ENCODE measurements at regions of chr17 and their contacts with region 1.

Region 1: DNA sequence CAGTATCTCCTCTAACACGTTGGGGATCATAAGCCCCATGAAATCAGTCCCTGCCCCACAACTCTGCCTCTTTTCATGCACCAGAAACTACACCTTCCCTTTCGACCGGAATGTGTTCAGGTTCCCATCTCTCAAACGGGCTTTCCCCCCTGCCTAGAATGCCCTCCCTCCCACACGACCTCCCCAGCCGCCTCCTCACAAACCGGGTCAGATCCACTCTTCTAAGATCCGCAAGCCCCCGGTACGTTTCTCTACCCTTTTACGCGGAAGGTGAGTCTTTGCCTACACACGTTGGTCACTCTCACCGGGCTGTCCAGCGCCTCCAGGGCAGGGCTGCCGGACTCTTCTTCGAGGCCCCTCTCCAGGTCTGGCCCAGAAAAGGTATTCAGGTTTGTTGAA is 708 bp downstream of the DHX33 start:
- H3K4me3 ChIP-seq: peak overlapping the region; percentile 89
- H3K27ac ChIP-seq: peak overlapping the region; percentile 80
- H3K4me1 ChIP-seq: peaks cover 18% of the 10 kb centered on the region
- CTCF ChIP-seq: no peak

Region 2: DNA sequence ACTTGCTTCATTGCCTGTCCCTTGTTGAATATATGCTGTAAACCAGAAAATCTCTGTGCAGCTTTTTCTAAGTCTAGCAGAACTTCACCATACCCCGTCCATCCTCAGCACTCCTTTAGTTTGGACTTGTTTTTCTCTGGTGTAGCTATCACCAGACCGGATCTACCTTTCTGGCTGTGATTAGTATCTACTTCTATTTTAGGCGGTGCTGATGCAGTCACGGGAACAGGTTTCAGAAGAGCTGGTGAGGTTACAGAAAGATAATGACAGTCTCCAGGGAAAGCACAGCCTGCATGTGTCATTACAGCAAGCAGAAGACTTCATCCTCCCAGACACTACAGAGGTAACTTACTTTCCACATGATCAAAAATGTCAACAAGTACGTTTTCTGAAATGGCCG is 95.0 kb before region 1 on chr17:
- CTCF ChIA-PET with region 1: no interaction called
- POLR2A ChIA-PET with region 1: no interaction called
- H3K4me3 ChIP-seq: no peak overlapping the region
- H3K27ac ChIP-seq: no peak overlapping the region
- H3K4me1 ChIP-seq: no peaks in the 10 kb centered on the region; the same call in 1 of the 2 replicates
- CTCF ChIP-seq: no peak

Region 3: GRCh38 chr17:5419356-5419958 is 48.6 kb before region 1 on chr17 and contains the start of gene NUP88:
- CTCF ChIA-PET with region 1: interaction called, 3 read pairs
- POLR2A ChIA-PET with region 1: interaction called, 10 read pairs
- H3K4me3 ChIP-seq: peak within 1 kb of the TSS; percentile 97
- H3K27ac ChIP-seq: peak within 1 kb of the TSS; percentile 92
- H3K4me1 ChIP-seq: no peaks in the 10 kb centered on the region; the same call in 1 of the 2 replicates
- CTCF ChIP-seq: no peak

Region 4: DNA sequence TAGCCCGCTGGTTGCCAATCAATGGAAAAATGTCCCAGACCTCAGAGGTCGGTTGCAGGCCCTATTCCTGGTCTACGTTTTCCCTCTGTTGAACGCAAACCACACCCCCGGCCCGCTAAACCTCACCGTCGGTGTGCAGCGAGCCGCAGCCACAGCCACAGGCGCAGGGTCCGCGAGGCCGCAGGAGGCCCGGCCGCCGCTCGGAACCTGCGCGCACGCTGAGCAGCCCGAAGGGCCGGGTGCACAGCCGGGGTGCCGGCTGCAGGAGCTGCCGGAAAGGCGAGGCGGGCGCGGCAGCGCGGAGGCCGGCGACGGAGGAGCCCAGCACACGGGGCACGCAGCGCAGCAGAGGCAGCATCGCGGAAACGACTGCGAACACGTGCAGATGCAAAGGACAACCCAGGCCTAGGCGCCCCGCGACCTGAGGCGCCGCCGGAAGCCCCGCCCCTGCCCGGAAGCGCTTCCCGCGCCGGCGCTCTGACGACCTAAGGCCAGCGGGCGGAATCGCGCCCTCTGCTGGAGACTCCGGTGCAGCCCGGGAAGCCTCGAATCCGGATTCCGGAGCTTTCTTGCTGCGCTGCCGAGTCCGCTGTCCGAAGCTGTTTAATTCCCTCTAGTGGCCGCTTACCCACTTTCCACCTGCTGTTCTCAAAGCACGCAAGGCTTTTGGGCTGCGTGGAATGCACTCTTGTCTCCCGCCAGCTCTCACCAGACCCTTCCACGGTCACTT is 29.2 kb before region 1 on chr17 and contains the start of gene C1QBP:
- CTCF ChIA-PET with region 1: interaction called, 26 read pairs
- POLR2A ChIA-PET with region 1: interaction called, 7 read pairs
- H3K4me3 ChIP-seq: peak within 1 kb of the TSS; percentile 90
- H3K27ac ChIP-seq: peak within 1 kb of the TSS; percentile 94
- H3K4me1 ChIP-seq: no peaks in the 10 kb centered on the region
- CTCF ChIP-seq: peak; percentile 98

Region 5: GRCh38 chr17:5486204-5487124 is 18.4 kb after region 1 on chr17 and contains the start of gene MIS12:
- CTCF ChIA-PET with region 1: interaction called, 4 read pairs
- POLR2A ChIA-PET with region 1: interaction called, 111 read pairs
- H3K4me3 ChIP-seq: peak within 1 kb of the TSS; percentile 96
- H3K27ac ChIP-seq: peak within 1 kb of the TSS; percentile 100
- H3K4me1 ChIP-seq: no peaks in the 10 kb centered on the region
- CTCF ChIP-seq: no peak